ENCODE measurements at regions of chr1 and their contacts with region 1.

Region 1: DNA sequence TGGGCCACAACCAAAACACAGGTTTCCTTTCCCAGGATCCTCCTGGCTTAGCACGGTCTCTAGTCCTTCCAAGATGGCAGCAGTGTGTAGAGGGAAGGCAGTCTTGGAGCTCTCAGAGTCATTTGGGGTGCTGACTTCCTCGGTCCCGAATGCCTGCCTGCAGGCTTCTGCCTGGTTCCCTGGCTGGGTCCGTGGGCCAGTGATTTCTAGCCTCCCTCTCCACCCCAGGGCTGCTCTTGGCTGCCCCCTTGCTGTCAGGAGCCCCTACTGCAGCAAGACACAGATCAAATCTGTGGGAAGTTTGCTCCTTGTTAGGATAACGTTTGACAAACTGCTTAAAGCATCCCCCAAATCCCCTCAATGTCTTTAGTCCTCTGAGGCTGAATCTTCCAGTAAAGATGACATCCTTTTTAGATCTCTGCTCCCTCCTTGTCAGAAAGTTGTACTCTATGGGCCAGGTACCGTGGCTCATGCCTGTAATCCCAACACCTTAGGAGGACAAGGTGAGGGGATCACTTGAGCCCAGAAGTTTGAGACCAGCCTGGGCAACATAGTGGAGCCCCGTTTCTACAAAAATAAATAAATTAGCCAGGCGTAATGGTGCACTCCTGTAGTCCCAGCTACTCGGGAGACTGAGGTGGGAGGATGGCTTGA is 272.5 kb downstream of the RRAGC start:
- DNase-seq: peak; percentile 77 to 88 (median 87)
- ATAC-seq: peak; percentile 95
- H3K4me3 ChIP-seq: 0 out of 2 replicates have a peak overlapping the region, but pooled peaks have one; percentile 6
- H3K27ac ChIP-seq: no peak overlapping the region
- H3K4me1 ChIP-seq: no peaks in the 10 kb centered on the region; a peak in 2 of 5 replicates
- H3K27me3 ChIP-seq: no peaks in the 10 kb centered on the region
- CTCF ChIP-seq: peak; percentile 94 to 99 (median 97)
- EP300 ChIP-seq: no peak
- POLR2A ChIP-seq: no peak
- RAD21 ChIP-seq: peak; percentile 86 to 95

Region 2: GRCh38 chr1:38046884-38047602 is 540.1 kb before region 1 on chr1:
- CTCF ChIA-PET with region 1: no interaction called
- POLR2A ChIA-PET with region 1: no interaction called
- in situ Hi-C with region 1: loop called (anchors 25 kb)
- intact Hi-C with region 1: loop called (anchors 10 kb)
- DNase-seq: peak; percentile 90 to 99 (median 98)
- ATAC-seq: peak; percentile 95
- H3K4me3 ChIP-seq: peak overlapping the region; percentile 49
- H3K27ac ChIP-seq: no peak overlapping the region
- H3K4me1 ChIP-seq: peaks cover 0 to 35% of the 10 kb centered on the region in 2 experiments; a peak in 3 of 5 replicates
- H3K27me3 ChIP-seq: peaks cover 24 to 48% of the 10 kb centered on the region in 2 experiments; a peak in 4 of 5 replicates
- CTCF ChIP-seq: no peak
- EP300 ChIP-seq: no peak
- POLR2A ChIP-seq: no peak
- RAD21 ChIP-seq: peak in 1 of 2 experiments; percentile 32; a peak in 1 of 4 replicates

Region 3: DNA sequence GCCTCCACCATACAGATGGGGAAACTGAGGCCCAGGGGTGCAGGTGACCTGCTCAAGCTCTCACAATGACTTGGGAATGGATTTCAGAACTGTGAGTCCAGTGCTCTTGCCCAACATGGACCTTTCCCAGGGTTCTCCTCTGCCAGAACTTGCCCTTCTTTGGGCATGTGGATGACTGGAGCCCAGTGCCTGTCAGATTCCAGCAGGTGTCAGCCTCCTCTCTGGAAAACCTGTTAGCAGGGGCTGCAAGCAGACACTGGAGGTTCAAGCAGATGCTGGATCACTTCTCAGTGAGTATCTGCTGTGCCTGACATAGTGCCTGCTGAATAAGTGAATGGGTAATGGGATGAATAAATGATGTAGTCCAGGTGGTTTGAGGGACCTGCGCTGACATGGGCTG is 226.3 kb before region 1 on chr1:
- CTCF ChIA-PET with region 1: no interaction called
- POLR2A ChIA-PET with region 1: no interaction called
- in situ Hi-C with region 1: loop called (anchors 10 kb)
- intact Hi-C with region 1: loop called (anchors 10 kb)
- DNase-seq: peak in 1 of 4 experiments; percentile 7
- ATAC-seq: 0 out of 3 replicates have a peak, but pooled peaks have one; percentile 42
- H3K4me3 ChIP-seq: no peak overlapping the region
- H3K27ac ChIP-seq: no peak overlapping the region
- H3K4me1 ChIP-seq: no peaks in the 10 kb centered on the region
- H3K27me3 ChIP-seq: peaks cover 2 to 4% of the 10 kb centered on the region in 2 experiments; a peak in 1 of 5 replicates
- CTCF ChIP-seq: peak; percentile 23 to 41 (median 34); a peak in 4 of 6 replicates
- EP300 ChIP-seq: no peak
- POLR2A ChIP-seq: no peak
- RAD21 ChIP-seq: peak; percentile 18 to 55; a peak in 2 of 4 replicates

Region 4: DNA sequence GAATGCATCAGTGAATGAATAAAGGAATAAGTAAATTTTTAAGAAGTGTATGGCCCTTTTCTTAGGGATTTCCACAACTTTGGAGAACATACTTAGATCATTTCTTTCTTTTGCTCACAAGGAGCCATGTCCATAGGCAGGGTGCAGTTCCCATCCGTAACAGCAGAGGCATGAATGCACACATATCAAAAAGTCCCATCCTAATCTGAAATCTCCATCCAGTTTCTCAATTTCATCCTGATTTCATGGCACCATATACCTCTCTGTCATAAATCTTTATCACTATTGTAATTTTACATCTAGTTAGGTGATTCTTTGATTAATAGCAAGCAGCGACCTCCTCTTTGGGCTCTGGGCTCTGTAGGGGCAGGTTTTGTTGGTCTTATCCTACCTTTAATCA is 86.8 kb before region 1 on chr1:
- CTCF ChIA-PET with region 1: no interaction called
- POLR2A ChIA-PET with region 1: no interaction called
- in situ Hi-C with region 1: no loop called
- intact Hi-C with region 1: loop called (anchors 5 kb)
- DNase-seq: peak in 2 of 4 experiments; percentile 58 to 61
- ATAC-seq: peak; percentile 80
- H3K4me3 ChIP-seq: no peak overlapping the region
- H3K27ac ChIP-seq: no peak overlapping the region
- H3K4me1 ChIP-seq: no peaks in the 10 kb centered on the region
- H3K27me3 ChIP-seq: peaks cover 0 to 3% of the 10 kb centered on the region in 2 experiments; a peak in 4 of 5 replicates
- CTCF ChIP-seq: peak in 2 of 3 experiments; percentile 59 to 62; a peak in 4 of 6 replicates
- EP300 ChIP-seq: no peak
- POLR2A ChIP-seq: no peak
- RAD21 ChIP-seq: peak in 1 of 2 experiments; percentile 41; a peak in 1 of 4 replicates

Measured in K562 (cell line).